Posterior vena cava (tissue), 2 donors: ENCODE measurements at regions of chr2 and their contacts with region 1.

Region 1: GRCh38 chr2:197378494-197379307 is 56.1 kb downstream of the SF3B1 start:
- DNase-seq: no peak

Region 2: DNA sequence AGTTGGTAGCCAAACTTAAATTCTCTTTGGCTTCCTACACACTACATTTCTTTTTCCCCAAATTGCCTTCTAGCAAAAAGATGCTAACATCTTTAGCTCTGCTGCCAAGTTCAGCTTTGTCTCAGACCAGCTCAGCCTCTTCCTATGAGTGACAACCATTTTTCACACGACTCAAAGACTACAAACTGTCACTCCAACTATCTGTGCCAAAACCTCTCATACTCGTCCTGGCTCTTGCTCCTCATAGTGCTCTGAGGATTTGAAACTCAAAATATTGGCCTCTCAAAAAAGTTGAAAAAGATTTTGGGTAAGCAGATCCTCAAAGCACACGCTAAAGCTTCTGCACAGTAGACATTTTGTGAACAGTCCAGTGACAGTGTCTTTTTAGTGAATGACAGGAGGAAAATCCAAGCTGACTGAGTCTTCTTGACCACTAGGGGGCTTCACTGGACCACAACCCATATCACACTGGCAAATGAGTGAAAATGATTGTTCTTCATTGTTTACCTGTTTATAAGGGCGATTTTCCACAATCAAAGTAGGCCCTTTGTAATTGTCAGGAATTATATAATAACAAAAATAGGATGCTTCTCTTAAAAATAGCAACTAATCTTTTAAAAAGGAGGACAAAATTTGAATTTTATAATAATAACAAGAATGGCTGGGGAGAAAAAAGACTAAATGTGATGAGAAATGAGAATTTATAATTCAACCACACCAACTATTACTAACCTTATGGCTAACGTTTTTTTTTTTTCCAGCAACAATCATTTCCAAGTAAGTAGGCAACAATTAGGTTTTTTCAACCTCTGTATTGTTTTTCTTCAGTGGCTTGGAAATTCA is 366.7 kb before region 1 on chr2:
- intact Hi-C with region 1: loop called (anchors 5 kb)
- DNase-seq: no peak

Region 3: GRCh38 chr2:197113275-197113711 is 265.4 kb before region 1 on chr2:
- intact Hi-C with region 1: loop called in 1 of 2 experiments (anchors 10 kb)
- DNase-seq: no peak

Region 4: GRCh38 chr2:197345846-197346370 is 32.8 kb before region 1 on chr2:
- intact Hi-C with region 1: loop called in 1 of 2 experiments (anchors 1 kb)
- DNase-seq: no peak

Region 5: DNA sequence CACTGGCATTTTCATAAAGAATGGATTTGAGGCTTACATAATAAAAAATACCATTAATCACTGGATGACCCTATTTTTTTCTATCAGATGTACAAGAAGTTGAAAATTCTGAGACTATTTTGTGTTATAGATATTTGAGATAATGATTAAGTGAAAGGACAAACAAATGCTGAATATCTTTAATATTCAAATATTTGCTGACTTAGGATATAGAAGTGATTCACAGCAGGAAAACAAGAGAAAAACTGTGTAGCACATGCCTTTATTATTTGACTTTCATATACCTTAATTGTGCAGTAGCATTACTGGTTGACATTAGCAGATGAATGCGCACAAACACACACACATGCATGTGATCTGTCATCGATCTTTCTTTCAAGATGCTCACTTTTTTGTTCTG is 1312.5 kb after region 1 on chr2:
- intact Hi-C with region 1: no loop called
- DNase-seq: no peak